CD8-positive, alpha-beta memory T cell (primary cell): ENCODE measurements at regions of chr6 and their contacts with region 1.

Region 1: DNA sequence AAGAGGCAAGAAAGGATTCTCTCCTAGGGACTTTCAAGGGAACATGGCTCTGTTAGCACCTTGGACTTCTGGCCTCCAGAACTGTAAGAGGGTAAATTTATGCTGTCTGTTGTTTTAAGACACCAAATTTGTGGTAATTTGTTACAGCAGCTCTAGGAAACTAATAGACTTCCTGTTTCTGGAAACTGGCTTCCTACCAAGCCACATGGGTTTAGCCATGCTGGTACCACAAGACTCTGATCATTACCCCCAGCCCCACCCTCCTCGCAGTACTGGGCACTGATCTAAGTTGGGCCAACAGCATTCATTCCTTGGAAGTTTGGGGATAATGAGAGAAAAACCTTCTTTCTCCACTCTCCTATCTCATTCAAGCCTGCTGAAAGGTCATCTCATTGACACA is 109.5 kb upstream of the SMLR1 start:
- DNase-seq: peak in 1 of 5 donors; percentile 10
- H3K4me3 ChIP-seq: no peak overlapping the region
- H3K4me3 Mint-ChIP-seq: peak overlapping the region in 4 of 7 donors; percentile 12 to 67 (median 50)
- H3K27ac ChIP-seq: no peak overlapping the region
- H3K27ac Mint-ChIP-seq: peak overlapping the region in 1 of 8 donors; percentile 67
- H3K4me1 ChIP-seq: peaks cover 13% of the 10 kb centered on the region
- H3K4me1 Mint-ChIP-seq: peaks cover 22 to 30% (median 26%) of the 10 kb centered on the region in 3 donors
- H3K27me3 ChIP-seq: no peaks in the 10 kb centered on the region
- H3K27me3 Mint-ChIP-seq: peaks cover 0 to 2% of the 10 kb centered on the region in 2 donors

Region 2: DNA sequence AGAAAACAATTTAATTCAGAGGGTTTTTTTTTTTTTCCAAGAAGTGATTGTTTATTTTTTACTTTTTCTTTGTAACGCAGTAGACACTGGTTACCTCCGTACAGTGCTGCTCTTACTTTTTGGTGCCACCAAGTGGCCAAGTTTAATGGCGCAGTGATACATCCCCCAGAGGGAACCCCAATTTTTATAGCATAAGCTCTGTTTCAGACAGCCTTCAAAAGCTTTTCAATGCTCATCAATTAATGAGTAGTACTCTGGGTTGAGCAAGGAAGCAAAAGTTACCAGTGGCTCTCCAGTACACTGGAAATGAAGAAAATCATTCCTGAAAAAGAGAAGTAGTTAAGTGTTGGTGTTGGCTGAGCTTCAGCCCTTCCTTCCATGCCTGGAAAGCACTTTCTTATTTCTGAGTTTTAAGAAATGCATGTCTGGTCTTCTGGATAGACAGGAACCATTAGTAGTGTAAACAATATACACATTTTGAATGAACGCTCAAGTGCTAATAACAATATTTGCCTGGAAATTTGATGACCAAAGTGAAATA is 19.6 kb before region 1 on chr6:
- CTCF ChIA-PET with region 1: interaction called, 10 read pairs
- POLR2A ChIA-PET with region 1: no interaction called
- DNase-seq: peak in 4 of 5 donors; percentile 24 to 61 (median 33)
- H3K4me3 ChIP-seq: no peak overlapping the region
- H3K4me3 Mint-ChIP-seq: peak overlapping the region in 5 of 7 donors; percentile 12 to 54 (median 45)
- H3K27ac ChIP-seq: no peak overlapping the region
- H3K27ac Mint-ChIP-seq: peak overlapping the region in 1 of 8 donors; percentile 15
- H3K4me1 ChIP-seq: peaks cover 28% of the 10 kb centered on the region
- H3K4me1 Mint-ChIP-seq: peaks cover 26 to 60% (median 54%) of the 10 kb centered on the region in 3 donors
- H3K27me3 ChIP-seq: no peaks in the 10 kb centered on the region
- H3K27me3 Mint-ChIP-seq: peaks cover 0 to 2% of the 10 kb centered on the region in 2 donors

Region 3: GRCh38 chr6:130776287-130776925 is 58.7 kb after region 1 on chr6:
- CTCF ChIA-PET with region 1: no interaction called
- POLR2A ChIA-PET with region 1: no interaction called
- DNase-seq: no peak
- H3K4me3 ChIP-seq: no peak overlapping the region
- H3K4me3 Mint-ChIP-seq: peak overlapping the region in 2 of 7 donors; percentile 5 to 43
- H3K27ac ChIP-seq: no peak overlapping the region
- H3K27ac Mint-ChIP-seq: peak overlapping the region in 2 of 8 donors; percentile 9 to 83
- H3K4me1 ChIP-seq: peaks cover 12% of the 10 kb centered on the region
- H3K4me1 Mint-ChIP-seq: peaks cover 25 to 45% (median 35%) of the 10 kb centered on the region in 3 donors
- H3K27me3 ChIP-seq: no peaks in the 10 kb centered on the region
- H3K27me3 Mint-ChIP-seq: no peaks in the 10 kb centered on the region

Region 4: DNA sequence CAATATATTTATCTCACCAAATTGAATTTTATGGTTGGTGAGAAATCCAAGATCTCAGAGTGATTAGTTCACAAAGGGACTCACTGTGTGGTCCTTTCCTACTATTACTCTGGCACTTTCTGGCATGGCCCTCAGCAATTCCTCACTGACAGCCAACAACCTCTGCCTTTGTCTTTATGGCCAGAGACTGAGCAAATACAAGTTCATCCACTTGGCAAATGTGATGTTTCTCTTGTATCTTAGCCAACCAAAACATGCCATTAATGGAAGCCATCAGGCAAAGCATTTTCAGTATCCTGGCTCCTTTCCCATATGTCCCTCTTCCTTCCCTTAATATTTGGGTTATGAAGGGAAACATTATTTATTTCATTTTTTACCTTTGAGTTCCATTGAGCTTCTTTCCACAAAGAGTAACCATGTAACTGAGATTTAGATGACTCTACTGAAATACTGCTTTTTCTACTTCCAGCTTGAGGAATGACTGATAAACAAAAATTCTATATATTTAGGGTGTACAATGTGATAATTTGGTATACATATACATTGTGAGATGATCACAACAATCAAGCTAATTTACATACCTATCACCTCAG is 78.8 kb after region 1 on chr6:
- CTCF ChIA-PET with region 1: no interaction called
- POLR2A ChIA-PET with region 1: no interaction called
- DNase-seq: no peak
- H3K4me3 ChIP-seq: no peak overlapping the region
- H3K4me3 Mint-ChIP-seq: no peak overlapping the region
- H3K27ac ChIP-seq: no peak overlapping the region
- H3K27ac Mint-ChIP-seq: no peak overlapping the region
- H3K4me1 ChIP-seq: no peaks in the 10 kb centered on the region
- H3K4me1 Mint-ChIP-seq: peaks cover 0 to 3% (median 2%) of the 10 kb centered on the region in 3 donors
- H3K27me3 ChIP-seq: no peaks in the 10 kb centered on the region
- H3K27me3 Mint-ChIP-seq: peaks cover 0 to 2% of the 10 kb centered on the region in 2 donors

Region 5: DNA sequence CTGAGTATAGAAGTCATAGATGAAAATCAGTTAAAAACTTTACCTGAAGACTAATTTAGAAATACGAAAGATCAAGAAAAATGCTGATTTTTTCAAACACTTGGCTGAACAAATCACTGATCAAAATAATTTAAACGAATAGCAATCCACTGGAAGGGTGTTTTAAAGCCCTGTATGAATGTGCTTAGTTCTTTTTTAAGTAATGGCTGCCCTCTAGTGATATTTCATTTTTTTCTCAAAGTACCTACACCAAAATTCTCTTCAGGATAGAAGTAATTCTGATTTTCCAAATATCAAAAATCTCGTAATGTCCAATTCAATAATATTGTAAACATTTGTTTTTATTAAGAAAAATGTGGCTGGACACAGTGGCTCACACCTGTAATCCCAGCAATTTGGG is 450.1 kb after region 1 on chr6:
- CTCF ChIA-PET with region 1: no interaction called
- POLR2A ChIA-PET with region 1: no interaction called
- DNase-seq: no peak
- H3K4me3 ChIP-seq: no peak overlapping the region
- H3K4me3 Mint-ChIP-seq: no peak overlapping the region
- H3K27ac ChIP-seq: no peak overlapping the region
- H3K27ac Mint-ChIP-seq: no peak overlapping the region
- H3K4me1 ChIP-seq: no peaks in the 10 kb centered on the region
- H3K4me1 Mint-ChIP-seq: no peaks in the 10 kb centered on the region
- H3K27me3 ChIP-seq: no peaks in the 10 kb centered on the region
- H3K27me3 Mint-ChIP-seq: peaks cover 0 to 1% of the 10 kb centered on the region in 2 donors